ENCODE measurements at regions of chr4 and their contacts with region 1.

Region 1: GRCh38 chr4:157992038-157992705 is 180.7 kb downstream of the GASK1B start:
- DNase-seq: no peak
- H3K4me3 ChIP-seq: peak overlapping the region in 3 of 4 donors; percentile 21 to 48 (median 32)
- H3K27ac ChIP-seq: peak overlapping the region in 3 of 4 donors; percentile 53 to 75 (median 61)
- H3K4me1 ChIP-seq: peaks cover 0 to 13% (median 10%) of the 10 kb centered on the region in 3 donors
- H3K27me3 ChIP-seq: no peaks in the 10 kb centered on the region
- CTCF ChIP-seq: peak in 5 of 6 experiments; percentile 53 to 74 (median 68)
- POLR2A ChIP-seq: no peak

Region 2: GRCh38 chr4:158090323-158090722 is 98.2 kb after region 1 on chr4:
- intact Hi-C with region 1: no loop called
- DNase-seq: no peak
- H3K4me3 ChIP-seq: no peak overlapping the region
- H3K27ac ChIP-seq: no peak overlapping the region
- H3K4me1 ChIP-seq: peaks cover 0 to 3% (median 0%) of the 10 kb centered on the region in 3 donors
- H3K27me3 ChIP-seq: no peaks in the 10 kb centered on the region
- CTCF ChIP-seq: no peak
- POLR2A ChIP-seq: no peak

Region 3: DNA sequence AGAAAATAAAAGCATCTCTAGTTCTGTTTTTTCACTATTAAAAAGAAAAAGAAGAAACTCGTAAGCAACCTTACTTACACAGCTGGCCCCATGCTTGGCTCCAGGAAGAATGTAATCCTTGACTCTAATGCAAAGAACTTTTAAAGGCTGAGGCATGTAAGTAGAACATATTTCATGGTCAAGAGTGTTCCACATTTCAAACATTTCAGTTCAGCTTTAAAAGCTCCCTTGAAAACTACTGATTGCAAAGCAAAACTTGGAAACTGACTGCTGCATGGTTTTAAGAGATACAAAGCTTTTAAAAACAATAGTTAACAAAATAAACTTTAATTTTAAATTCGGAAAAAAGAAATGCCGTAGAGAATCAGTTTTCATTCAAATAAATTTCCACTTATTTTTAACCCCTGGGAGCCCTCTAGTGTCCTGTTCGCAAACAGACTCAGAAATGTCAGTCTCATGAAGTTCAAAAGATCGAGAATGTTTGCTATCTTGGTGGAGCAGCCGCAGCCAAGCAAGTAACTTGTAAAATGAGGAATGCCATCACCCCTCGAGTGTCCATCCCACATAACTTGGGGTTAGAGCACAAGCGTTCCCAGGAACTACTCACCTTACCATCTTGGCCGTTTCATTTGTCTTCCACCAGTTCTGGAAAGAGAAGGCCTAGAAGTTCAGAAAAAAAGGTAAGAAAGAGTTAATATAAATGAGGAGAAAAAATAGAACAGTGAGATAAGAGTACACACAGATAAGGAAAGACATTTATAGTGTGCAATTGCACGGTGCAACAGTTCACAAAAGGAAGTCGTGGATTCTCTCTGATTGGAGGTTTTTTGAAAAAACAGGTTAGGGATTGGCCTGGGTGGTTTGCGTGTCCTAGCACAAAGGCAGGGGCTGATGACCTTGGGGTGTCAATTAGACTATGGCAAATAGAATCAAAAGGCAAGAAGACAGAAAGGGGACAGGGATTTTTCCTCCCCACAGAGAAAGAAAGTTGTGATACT is 180.4 kb after region 1 on chr4 and contains the start of gene GASK1B:
- intact Hi-C with region 1: loop called (anchors 5 kb)
- DNase-seq: no peak
- H3K4me3 ChIP-seq: peak within 1 kb of the TSS; percentile 20 to 68 (median 48)
- H3K27ac ChIP-seq: peak within 1 kb of the TSS in 3 of 4 donors; percentile 59 to 79 (median 78)
- H3K4me1 ChIP-seq: peaks cover 0 to 53% (median 7%) of the 10 kb centered on the region in 3 donors
- H3K27me3 ChIP-seq: no peaks in the 10 kb centered on the region
- CTCF ChIP-seq: peak; percentile 20 to 62 (median 54)
- POLR2A ChIP-seq: no peak
- total RNA-seq, gene GASK1B: 1.0 to 23.7 (median 10.6) TPM